ENCODE measurements at regions of chr20 and their contacts with region 1.

Region 1: GRCh38 chr20:2429061-2429460 is 41.5 kb downstream of the SNRPB start:
- DNase-seq: no peak
- ATAC-seq: no peak
- H3K4me3 ChIP-seq: no peak overlapping the region
- H3K27ac ChIP-seq: no peak overlapping the region
- H3K4me1 ChIP-seq: no peaks in the 10 kb centered on the region
- H3K27me3 ChIP-seq: peaks cover 0 to 4% (median 0%) of the 10 kb centered on the region in 7 donors
- CTCF ChIP-seq: no peak

Region 2: DNA sequence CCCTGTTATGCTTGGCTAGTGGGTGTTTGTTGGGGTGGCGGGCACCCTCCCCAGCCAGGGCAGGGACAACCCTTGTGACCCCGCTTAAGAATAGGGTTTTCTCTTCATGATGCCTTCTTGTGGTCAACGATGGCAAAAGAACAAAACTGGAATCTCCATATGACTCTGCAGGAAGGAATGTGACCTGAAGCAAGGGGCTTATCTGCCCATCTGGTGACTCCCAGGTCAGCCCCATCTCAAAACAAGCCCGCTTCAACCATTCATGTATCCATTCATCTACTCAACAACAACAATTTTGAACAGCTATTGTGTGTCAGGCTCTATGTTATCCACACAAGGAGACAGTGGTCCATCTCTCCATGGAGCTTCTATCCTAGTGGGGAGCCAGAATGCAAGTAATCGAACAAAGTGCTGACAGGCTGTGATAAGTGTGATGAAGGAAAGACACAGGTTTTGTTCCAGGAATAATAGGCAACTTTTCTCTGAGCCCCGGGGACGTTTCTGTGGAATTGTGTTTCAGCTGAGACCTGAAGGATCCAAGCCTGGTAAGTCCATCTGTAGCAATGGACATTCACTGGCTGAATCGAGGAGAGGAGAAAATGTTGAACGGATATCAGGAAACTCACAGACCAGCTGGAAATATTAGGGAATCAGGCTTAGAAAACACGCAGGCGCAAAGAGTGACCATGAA is 79.1 kb before region 1 on chr20:
- intact Hi-C with region 1: no loop called
- DNase-seq: no peak
- ATAC-seq: no peak
- H3K4me3 ChIP-seq: no peak overlapping the region
- H3K27ac ChIP-seq: no peak overlapping the region
- H3K4me1 ChIP-seq: peaks cover 0 to 6% (median 0%) of the 10 kb centered on the region in 9 donors
- H3K27me3 ChIP-seq: peaks cover 0 to 56% (median 44%) of the 10 kb centered on the region in 7 donors
- CTCF ChIP-seq: no peak

Region 3: GRCh38 chr20:2364044-2364443 is 65.0 kb before region 1 on chr20:
- intact Hi-C with region 1: loop called in 1 of 10 experiments (anchors 2 kb)
- DNase-seq: no peak
- ATAC-seq: no peak
- H3K4me3 ChIP-seq: no peak overlapping the region
- H3K27ac ChIP-seq: no peak overlapping the region
- H3K4me1 ChIP-seq: no peaks in the 10 kb centered on the region
- H3K27me3 ChIP-seq: peaks cover 0 to 19% (median 5%) of the 10 kb centered on the region in 7 donors
- CTCF ChIP-seq: no peak

Region 4: GRCh38 chr20:2643708-2644107 is 214.6 kb after region 1 on chr20:
- intact Hi-C with region 1: no loop called
- DNase-seq: no peak
- ATAC-seq: no peak
- H3K4me3 ChIP-seq: no peak overlapping the region
- H3K27ac ChIP-seq: no peak overlapping the region
- H3K4me1 ChIP-seq: peaks cover 0 to 6% (median 0%) of the 10 kb centered on the region in 9 donors
- H3K27me3 ChIP-seq: no peaks in the 10 kb centered on the region
- CTCF ChIP-seq: no peak

Measured in heart right ventricle (tissue), 16 donors.